ENCODE measurements at regions of chr18 and their contacts with region 1.

Region 1: GRCh38 chr18:2655178-2655953 is at the start of gene SMCHD1:
- DNase-seq: peak; percentile 87 to 94
- ATAC-seq: peak; percentile 74 to 92 (median 80)
- H3K4me3 ChIP-seq: peak within 1 kb of the TSS; percentile 100
- H3K4me3 Mint-ChIP-seq: peak within 1 kb of the TSS; percentile 96
- H3K27ac ChIP-seq: peak within 1 kb of the TSS; percentile 99
- H3K27ac Mint-ChIP-seq: peak within 1 kb of the TSS; percentile 96 to 97
- H3K4me1 ChIP-seq: peaks cover 19% of the 10 kb centered on the region
- H3K4me1 Mint-ChIP-seq: peaks cover 35 to 37% of the 10 kb centered on the region in 2 donors
- H3K27me3 ChIP-seq: no peaks in the 10 kb centered on the region
- H3K27me3 Mint-ChIP-seq: no peaks in the 10 kb centered on the region
- CTCF ChIP-seq: no peak
- total RNA-seq, gene SMCHD1: 200 to 240 (median 203) TPM

Region 2: DNA sequence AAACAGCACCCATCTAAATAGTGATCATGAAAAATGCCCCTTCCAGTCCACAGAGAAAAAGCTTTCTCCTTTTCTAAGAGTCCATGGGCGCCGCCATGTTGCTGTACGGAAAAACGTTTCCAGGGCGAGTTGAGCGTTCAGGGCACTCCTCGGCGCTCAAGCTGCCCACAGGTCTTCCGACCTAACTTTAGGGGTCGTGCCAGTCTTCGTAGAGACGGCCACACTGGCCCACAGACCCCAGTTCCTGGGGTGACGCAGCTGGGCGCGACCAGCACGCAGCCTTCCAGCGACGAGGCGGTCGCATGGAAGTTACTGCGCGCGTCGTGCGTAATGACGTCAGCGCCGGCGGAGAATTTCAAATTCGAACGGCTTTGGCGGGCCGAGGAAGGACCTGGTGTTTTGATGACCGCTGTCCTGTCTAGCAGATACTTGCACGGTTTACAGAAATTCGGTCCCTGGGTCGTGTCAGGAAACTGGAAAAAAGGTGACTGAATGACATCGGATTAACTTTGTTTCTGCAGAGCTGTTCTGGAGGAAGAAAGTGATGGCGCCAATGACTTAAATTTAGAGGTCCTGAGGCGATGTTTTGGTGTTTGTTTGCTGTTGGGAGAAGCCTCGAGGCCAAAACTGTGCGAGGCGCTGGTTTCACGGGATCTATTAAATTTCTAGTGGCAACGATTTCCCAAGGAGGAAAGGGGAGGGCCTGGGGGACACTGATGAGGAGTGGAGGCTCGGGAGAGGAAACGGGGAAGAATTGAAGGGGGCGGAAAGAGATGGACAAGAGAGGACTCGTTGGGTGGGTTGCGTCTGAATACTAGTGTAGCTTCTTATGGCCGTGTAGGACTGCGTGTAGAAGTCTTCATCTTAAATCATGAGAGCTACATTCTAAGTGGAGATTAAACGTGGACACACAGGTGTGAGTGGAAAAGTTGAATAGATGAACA is 83.9 kb before region 1 on chr18 and contains the starts of genes METTL4 and NDC80:
- intact Hi-C with region 1: loop called (anchors 1 kb)
- DNase-seq: peak; percentile 87 to 94
- ATAC-seq: peak; percentile 87 to 91 (median 90)
- H3K4me3 ChIP-seq: peak within 1 kb of the TSS; percentile 75
- H3K4me3 Mint-ChIP-seq: peak within 1 kb of the TSS; percentile 98
- H3K27ac ChIP-seq: peak within 1 kb of the TSS; percentile 96
- H3K27ac Mint-ChIP-seq: peak within 1 kb of the TSS; percentile 99 to 100
- H3K4me1 ChIP-seq: peaks cover 20% of the 10 kb centered on the region
- H3K4me1 Mint-ChIP-seq: peaks cover 42 to 47% of the 10 kb centered on the region in 2 donors
- H3K27me3 ChIP-seq: no peaks in the 10 kb centered on the region
- H3K27me3 Mint-ChIP-seq: no peaks in the 10 kb centered on the region
- CTCF ChIP-seq: no peak
- total RNA-seq, gene METTL4: 9.1 to 11.3 (median 10.6) TPM
- total RNA-seq, gene NDC80: 3.4 to 6.5 (median 5.5) TPM

Region 3: DNA sequence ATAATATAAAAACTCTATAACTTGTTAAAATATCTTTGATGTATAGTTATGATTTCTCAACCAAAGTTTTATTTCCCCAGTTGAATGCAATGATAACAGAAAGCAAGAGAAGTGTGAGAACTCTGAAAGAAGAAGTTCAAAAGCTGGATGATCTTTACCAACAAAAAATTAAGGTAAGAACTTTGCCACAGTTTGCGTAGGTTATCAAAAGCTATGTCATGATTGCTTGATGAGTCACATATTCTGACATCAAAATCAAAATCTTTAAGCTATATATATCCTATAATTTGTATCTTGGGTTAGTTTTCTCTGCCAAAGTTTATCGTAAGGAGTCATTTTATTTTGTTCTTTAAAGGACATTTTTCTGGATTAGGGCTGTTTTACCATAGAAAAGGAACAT is 49.0 kb before region 1 on chr18:
- intact Hi-C with region 1: loop called (anchors 5 kb)
- DNase-seq: peak in 1 of 2 donors; percentile 60
- ATAC-seq: peak; percentile 39 to 49 (median 39)
- H3K4me3 ChIP-seq: no peak overlapping the region
- H3K4me3 Mint-ChIP-seq: peak overlapping the region; percentile 74
- H3K27ac ChIP-seq: peak overlapping the region; percentile 70
- H3K27ac Mint-ChIP-seq: peak overlapping the region; percentile 89 to 92
- H3K4me1 ChIP-seq: peaks cover 3% of the 10 kb centered on the region
- H3K4me1 Mint-ChIP-seq: peaks cover 20 to 21% of the 10 kb centered on the region in 2 donors
- H3K27me3 ChIP-seq: no peaks in the 10 kb centered on the region
- H3K27me3 Mint-ChIP-seq: no peaks in the 10 kb centered on the region
- CTCF ChIP-seq: no peak

Region 4: DNA sequence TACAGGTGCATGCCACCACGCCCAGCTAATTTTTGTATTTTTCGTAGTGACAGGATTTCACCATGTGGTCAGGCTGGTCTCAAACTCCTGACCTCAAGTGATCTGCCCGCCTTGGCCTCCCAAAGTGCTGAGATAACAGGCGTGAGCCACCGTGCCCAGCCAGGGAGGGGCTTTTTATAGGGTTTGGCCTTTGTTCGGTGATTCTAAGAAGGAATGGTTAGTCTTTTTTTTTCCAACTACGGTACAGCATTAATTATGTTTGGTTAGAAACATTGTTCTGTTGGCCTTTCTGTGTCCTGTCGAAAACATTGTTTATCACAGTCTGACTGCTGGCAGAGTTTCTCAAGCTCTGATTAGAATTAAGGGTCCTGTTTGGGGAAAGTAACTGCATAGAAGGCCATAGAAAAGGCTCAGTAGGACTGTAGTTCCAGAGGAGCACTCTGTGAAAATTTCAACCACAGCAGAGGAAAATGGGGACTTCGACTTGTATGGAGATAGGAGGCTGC is 19.2 kb before region 1 on chr18:
- intact Hi-C with region 1: loop called (anchors 1 kb)
- DNase-seq: peak in 1 of 2 donors; percentile 31
- ATAC-seq: peak; percentile 33 to 40 (median 35)
- H3K4me3 ChIP-seq: peak overlapping the region; percentile 1
- H3K4me3 Mint-ChIP-seq: peak overlapping the region; percentile 92
- H3K27ac ChIP-seq: peak overlapping the region; percentile 92
- H3K27ac Mint-ChIP-seq: peak overlapping the region; percentile 97 to 100
- H3K4me1 ChIP-seq: peaks cover 50% of the 10 kb centered on the region
- H3K4me1 Mint-ChIP-seq: peaks cover 56 to 60% of the 10 kb centered on the region in 2 donors
- H3K27me3 ChIP-seq: no peaks in the 10 kb centered on the region
- H3K27me3 Mint-ChIP-seq: no peaks in the 10 kb centered on the region
- CTCF ChIP-seq: no peak

Region 5: DNA sequence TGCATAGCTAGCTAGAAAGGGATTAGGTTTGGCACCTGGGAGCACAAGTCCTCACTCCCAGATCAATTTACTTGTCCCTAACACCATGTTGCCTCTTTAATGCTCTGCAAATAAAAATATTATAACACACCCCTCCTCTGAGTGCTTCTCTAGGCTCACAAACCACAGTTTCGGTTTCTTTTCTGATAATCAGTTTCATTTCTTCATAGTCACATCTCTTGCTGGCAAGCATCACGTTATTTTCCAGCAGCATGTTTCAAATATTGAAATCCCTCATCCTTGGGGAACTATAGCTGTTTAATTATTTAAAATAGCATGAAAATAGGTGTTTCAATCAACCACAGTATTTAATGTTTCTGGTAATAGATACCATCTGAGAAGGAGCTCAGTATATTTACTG is 13.7 kb before region 1 on chr18:
- intact Hi-C with region 1: loop called (anchors 1 kb)
- DNase-seq: peak in 1 of 2 donors; percentile 80
- ATAC-seq: peak; percentile 59 to 69 (median 65)
- H3K4me3 ChIP-seq: peak overlapping the region; percentile 15
- H3K4me3 Mint-ChIP-seq: peak overlapping the region; percentile 91
- H3K27ac ChIP-seq: peak overlapping the region; percentile 74
- H3K27ac Mint-ChIP-seq: peak overlapping the region; percentile 84 to 97
- H3K4me1 ChIP-seq: peaks cover 37% of the 10 kb centered on the region
- H3K4me1 Mint-ChIP-seq: peaks cover 40 to 45% of the 10 kb centered on the region in 2 donors
- H3K27me3 ChIP-seq: no peaks in the 10 kb centered on the region
- H3K27me3 Mint-ChIP-seq: no peaks in the 10 kb centered on the region
- CTCF ChIP-seq: no peak

Region 6: DNA sequence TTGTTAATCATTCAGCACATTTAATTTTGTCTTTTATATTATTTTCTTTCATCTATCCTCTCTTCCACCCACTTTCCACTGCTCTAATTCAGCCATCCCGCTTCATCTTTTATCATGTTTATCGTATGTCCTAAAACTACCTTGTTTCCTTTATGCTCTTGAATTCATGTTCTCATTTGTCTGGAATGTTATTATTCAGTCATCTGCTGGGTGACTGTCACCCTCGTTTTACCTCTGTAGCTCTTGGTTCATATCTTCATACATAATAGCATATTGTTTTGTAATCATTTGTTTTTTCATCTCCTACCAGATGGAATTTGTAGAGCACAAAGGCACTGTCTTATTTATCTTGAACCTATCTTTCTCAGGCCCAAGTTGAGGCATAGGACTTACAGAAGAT is 37.1 kb after region 1 on chr18:
- intact Hi-C with region 1: loop called (anchors 5 kb)
- DNase-seq: no peak
- ATAC-seq: no peak
- H3K4me3 ChIP-seq: no peak overlapping the region
- H3K4me3 Mint-ChIP-seq: no peak overlapping the region
- H3K27ac ChIP-seq: no peak overlapping the region
- H3K27ac Mint-ChIP-seq: peak overlapping the region in 1 of 2 donors; percentile 0
- H3K4me1 ChIP-seq: no peaks in the 10 kb centered on the region
- H3K4me1 Mint-ChIP-seq: peaks cover 16 to 19% of the 10 kb centered on the region in 2 donors
- H3K27me3 ChIP-seq: no peaks in the 10 kb centered on the region
- H3K27me3 Mint-ChIP-seq: no peaks in the 10 kb centered on the region
- CTCF ChIP-seq: no peak

Region 7: GRCh38 chr18:2971741-2972552 is 316.6 kb after region 1 on chr18:
- intact Hi-C with region 1: loop called (anchors 5 kb)
- DNase-seq: peak; percentile 76 to 85
- ATAC-seq: peak; percentile 88 to 94 (median 94)
- H3K4me3 ChIP-seq: peak overlapping the region; percentile 33
- H3K4me3 Mint-ChIP-seq: peak overlapping the region; percentile 90
- H3K27ac ChIP-seq: peak overlapping the region; percentile 96
- H3K27ac Mint-ChIP-seq: peak overlapping the region; percentile 98
- H3K4me1 ChIP-seq: peaks cover 50% of the 10 kb centered on the region
- H3K4me1 Mint-ChIP-seq: peaks cover 76% of the 10 kb centered on the region in 2 donors
- H3K27me3 ChIP-seq: no peaks in the 10 kb centered on the region
- H3K27me3 Mint-ChIP-seq: no peaks in the 10 kb centered on the region
- CTCF ChIP-seq: no peak